ENCODE measurements at regions of chr6 and their contacts with region 1.

Region 1: DNA sequence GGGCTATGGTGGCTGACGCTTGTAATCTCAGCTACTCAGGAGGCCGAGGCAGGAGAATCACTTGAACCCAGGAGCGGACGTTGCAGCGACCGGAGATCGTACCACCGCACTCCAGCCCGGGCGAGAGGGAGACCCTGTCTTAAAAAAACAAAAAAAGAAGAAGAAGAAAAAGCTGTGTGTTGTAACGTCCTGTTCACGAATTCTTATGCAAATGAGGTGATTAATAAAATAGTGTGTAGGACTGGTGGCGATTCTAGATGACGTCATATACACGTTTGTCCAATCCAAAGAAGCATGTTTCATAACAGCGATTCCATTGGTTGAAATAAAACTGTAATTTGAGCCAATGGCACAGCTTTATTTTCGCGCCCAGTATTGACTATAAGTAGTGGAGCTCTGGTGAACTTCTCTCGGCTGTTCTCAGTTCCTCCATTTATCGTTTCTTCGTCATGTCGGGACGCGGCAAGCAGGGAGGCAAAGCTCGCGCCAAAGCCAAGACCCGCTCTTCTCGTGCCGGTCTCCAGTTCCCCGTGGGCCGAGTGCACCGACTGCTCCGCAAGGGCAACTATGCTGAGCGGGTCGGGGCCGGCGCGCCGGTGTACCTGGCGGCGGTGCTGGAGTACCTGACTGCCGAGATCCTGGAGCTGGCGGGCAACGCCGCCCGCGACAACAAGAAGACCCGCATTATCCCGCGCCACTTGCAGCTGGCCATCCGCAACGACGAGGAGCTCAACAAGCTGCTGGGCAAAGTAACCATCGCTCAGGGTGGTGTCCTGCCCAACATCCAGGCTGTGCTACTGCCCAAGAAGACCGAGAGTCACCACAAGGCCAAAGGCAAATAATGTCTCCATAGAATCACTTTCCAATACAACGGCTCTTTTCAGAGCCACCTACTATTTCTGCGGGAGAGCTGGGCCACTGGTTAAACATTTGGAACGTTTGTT is 47.0 kb downstream of the OR2B2 start:
- DNase-seq: peak; percentile 86 to 93 (median 91)
- H3K4me3 ChIP-seq: peak overlapping the region; percentile 33 to 69
- H3K4me3 Mint-ChIP-seq: peak overlapping the region; percentile 96 to 99 (median 99)
- H3K27ac ChIP-seq: peak overlapping the region; percentile 62
- H3K27ac Mint-ChIP-seq: peak overlapping the region; percentile 94 to 99 (median 98)
- H3K4me1 ChIP-seq: peaks cover 31% of the 10 kb centered on the region
- H3K4me1 Mint-ChIP-seq: peaks cover 18 to 46% (median 34%) of the 10 kb centered on the region in 4 donors
- H3K27me3 ChIP-seq: no peaks in the 10 kb centered on the region
- H3K27me3 Mint-ChIP-seq: no peaks in the 10 kb centered on the region

Region 2: GRCh38 chr6:27138837-27139755 is 726.1 kb before region 1 on chr6:
- CTCF ChIA-PET with region 1: interaction called, 5 read pairs
- POLR2A ChIA-PET with region 1: interaction called, 84 read pairs
- intact Hi-C with region 1: no loop called
- DNase-seq: peak; percentile 64 to 79 (median 69)
- H3K4me3 ChIP-seq: peak overlapping the region; percentile 58 to 73
- H3K4me3 Mint-ChIP-seq: peak overlapping the region; percentile 93 to 98 (median 96)
- H3K27ac ChIP-seq: peak overlapping the region; percentile 94
- H3K27ac Mint-ChIP-seq: peak overlapping the region; percentile 98 to 99 (median 99)
- H3K4me1 ChIP-seq: peaks cover 45% of the 10 kb centered on the region
- H3K4me1 Mint-ChIP-seq: peaks cover 30 to 66% (median 40%) of the 10 kb centered on the region in 4 donors
- H3K27me3 ChIP-seq: no peaks in the 10 kb centered on the region
- H3K27me3 Mint-ChIP-seq: no peaks in the 10 kb centered on the region

Region 3: GRCh38 chr6:27700337-27700736 is 164.8 kb before region 1 on chr6:
- CTCF ChIA-PET with region 1: no interaction called
- POLR2A ChIA-PET with region 1: no interaction called
- intact Hi-C with region 1: no loop called
- DNase-seq: no peak
- H3K4me3 ChIP-seq: no peak overlapping the region
- H3K4me3 Mint-ChIP-seq: no peak overlapping the region
- H3K27ac ChIP-seq: no peak overlapping the region
- H3K27ac Mint-ChIP-seq: no peak overlapping the region
- H3K4me1 ChIP-seq: peaks cover 2% of the 10 kb centered on the region
- H3K4me1 Mint-ChIP-seq: peaks cover 6 to 21% (median 13%) of the 10 kb centered on the region in 4 donors
- H3K27me3 ChIP-seq: no peaks in the 10 kb centered on the region
- H3K27me3 Mint-ChIP-seq: no peaks in the 10 kb centered on the region

Region 4: GRCh38 chr6:27825025-27825793 is 40.0 kb before region 1 on chr6:
- CTCF ChIA-PET with region 1: interaction called, 30 read pairs
- POLR2A ChIA-PET with region 1: interaction called, 1,261 read pairs
- intact Hi-C with region 1: no loop called
- DNase-seq: no peak
- H3K4me3 ChIP-seq: peak overlapping the region; percentile 62 to 79
- H3K4me3 Mint-ChIP-seq: peak overlapping the region; percentile 88 to 98 (median 92)
- H3K27ac ChIP-seq: peak overlapping the region; percentile 66
- H3K27ac Mint-ChIP-seq: peak overlapping the region; percentile 91 to 100 (median 98)
- H3K4me1 ChIP-seq: peaks cover 29% of the 10 kb centered on the region
- H3K4me1 Mint-ChIP-seq: peaks cover 16 to 43% (median 31%) of the 10 kb centered on the region in 4 donors
- H3K27me3 ChIP-seq: no peaks in the 10 kb centered on the region
- H3K27me3 Mint-ChIP-seq: no peaks in the 10 kb centered on the region

Region 5: GRCh38 chr6:27977387-27977786 is 112.2 kb after region 1 on chr6:
- CTCF ChIA-PET with region 1: no interaction called
- POLR2A ChIA-PET with region 1: no interaction called
- intact Hi-C with region 1: no loop called
- DNase-seq: no peak
- H3K4me3 ChIP-seq: no peak overlapping the region
- H3K4me3 Mint-ChIP-seq: no peak overlapping the region
- H3K27ac ChIP-seq: no peak overlapping the region
- H3K27ac Mint-ChIP-seq: no peak overlapping the region
- H3K4me1 ChIP-seq: no peaks in the 10 kb centered on the region
- H3K4me1 Mint-ChIP-seq: no peaks in the 10 kb centered on the region
- H3K27me3 ChIP-seq: peaks cover 3% of the 10 kb centered on the region
- H3K27me3 Mint-ChIP-seq: peaks cover 15 to 27% of the 10 kb centered on the region in 2 donors

Region 6: DNA sequence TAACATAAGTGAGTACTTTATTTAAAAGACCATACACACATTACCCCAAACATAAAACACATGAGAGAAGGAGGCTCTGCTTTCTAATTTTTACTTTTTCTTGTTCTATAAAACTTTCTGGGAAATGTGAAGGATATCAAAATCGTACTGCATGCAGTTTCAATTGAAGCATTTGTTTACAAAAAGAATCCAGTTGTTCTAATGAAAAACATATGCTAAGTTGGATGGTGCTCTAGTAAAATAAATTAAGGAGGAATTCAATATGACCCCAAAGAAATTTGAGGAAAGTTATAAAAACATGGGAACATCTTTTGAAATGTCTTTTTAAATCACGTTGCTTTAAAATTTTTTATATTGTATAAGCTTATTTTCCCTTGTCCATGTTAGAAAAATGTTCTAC is 129.4 kb after region 1 on chr6:
- CTCF ChIA-PET with region 1: no interaction called
- POLR2A ChIA-PET with region 1: no interaction called
- intact Hi-C with region 1: no loop called
- DNase-seq: no peak
- H3K4me3 ChIP-seq: no peak overlapping the region
- H3K4me3 Mint-ChIP-seq: no peak overlapping the region
- H3K27ac ChIP-seq: no peak overlapping the region
- H3K27ac Mint-ChIP-seq: no peak overlapping the region
- H3K4me1 ChIP-seq: no peaks in the 10 kb centered on the region
- H3K4me1 Mint-ChIP-seq: no peaks in the 10 kb centered on the region
- H3K27me3 ChIP-seq: no peaks in the 10 kb centered on the region
- H3K27me3 Mint-ChIP-seq: peaks cover 15 to 32% of the 10 kb centered on the region in 2 donors

Measured in CD4-positive, alpha-beta memory T cell (primary cell).